Posterior vena cava (tissue), 2 donors: ENCODE measurements at regions of chr13 and their contacts with region 1.

Region 1: DNA sequence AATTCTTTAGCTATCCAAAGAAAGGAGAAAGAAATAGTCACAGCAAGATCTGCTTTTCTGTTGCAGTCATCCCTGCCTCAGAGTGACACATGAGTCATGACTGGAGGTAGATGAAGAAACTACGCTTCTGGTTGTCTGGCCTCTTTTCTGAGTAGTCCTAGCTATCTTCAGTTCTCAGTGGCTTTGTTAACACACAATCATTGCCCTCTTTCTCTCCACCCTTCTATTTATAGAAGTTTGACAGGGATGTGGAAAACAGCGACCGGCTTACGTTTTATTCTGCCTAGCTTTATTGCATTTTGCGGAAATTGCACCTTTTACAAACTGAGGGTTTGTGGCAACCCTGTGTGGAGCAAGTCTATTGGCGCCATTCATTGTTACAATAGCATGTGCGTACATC is 26.7 kb downstream of the SPATA13 start:
- DNase-seq: no peak

Region 2: GRCh38 chr13:23460309-23460708 is 726.9 kb before region 1 on chr13:
- intact Hi-C with region 1: loop called in 1 of 2 experiments (anchors 5 kb)
- DNase-seq: no peak